GM12878 (cell line): ENCODE measurements at regions of chr2 and their contacts with region 1.

Region 1: GRCh38 chr2:60976875-60977561 is 40.5 kb upstream of the PEX13 start:
- DNase-seq: no peak
- ATAC-seq: peak; percentile 66
- H3K4me3 ChIP-seq: no peak overlapping the region; the same call in 1 of the 2 replicates
- H3K27ac ChIP-seq: no peak overlapping the region
- H3K4me1 ChIP-seq: peaks cover 56% of the 10 kb centered on the region
- H3K27me3 ChIP-seq: no peaks in the 10 kb centered on the region
- CTCF ChIP-seq: no peak
- EP300 ChIP-seq: 0 out of 4 replicates have a peak, but pooled peaks of 1 of the 2 experiments have one; percentile 6
- POLR2A ChIP-seq: no peak
- RAD21 ChIP-seq: no peak

Region 2: GRCh38 chr2:60992985-60993392 is 16.0 kb after region 1 on chr2:
- CTCF ChIA-PET with region 1: interaction called, 5 read pairs
- POLR2A ChIA-PET with region 1: interaction called, 7 read pairs
- RAD21 ChIA-PET with region 1: interaction called, 12 read pairs
- SMC1A ChIA-PET with region 1: interaction called, 26 read pairs
- in situ Hi-C with region 1: no loop called
- intact Hi-C with region 1: no loop called
- DNase-seq: peak; percentile 83
- ATAC-seq: peak; percentile 99
- H3K4me3 ChIP-seq: no peak overlapping the region
- H3K27ac ChIP-seq: peak overlapping the region; percentile 41
- H3K4me1 ChIP-seq: peaks cover 7% of the 10 kb centered on the region
- H3K27me3 ChIP-seq: no peaks in the 10 kb centered on the region
- CTCF ChIP-seq: no peak
- EP300 ChIP-seq: peak; percentile 82 to 93
- POLR2A ChIP-seq: no peak
- RAD21 ChIP-seq: no peak

Region 3: GRCh38 chr2:61029533-61029932 is 52.5 kb after region 1 on chr2:
- CTCF ChIA-PET with region 1: no interaction called
- POLR2A ChIA-PET with region 1: no interaction called
- RAD21 ChIA-PET with region 1: no interaction called
- SMC1A ChIA-PET with region 1: no interaction called
- in situ Hi-C with region 1: no loop called
- intact Hi-C with region 1: no loop called
- DNase-seq: no peak
- ATAC-seq: no peak
- H3K4me3 ChIP-seq: no peak overlapping the region
- H3K27ac ChIP-seq: no peak overlapping the region
- H3K4me1 ChIP-seq: no peaks in the 10 kb centered on the region
- H3K27me3 ChIP-seq: no peaks in the 10 kb centered on the region
- CTCF ChIP-seq: no peak
- EP300 ChIP-seq: no peak
- POLR2A ChIP-seq: no peak
- RAD21 ChIP-seq: no peak